Right cardiac atrium (tissue), 5 donors: ENCODE measurements at regions of chr7 and their contacts with region 1.

Region 1: GRCh38 chr7:85882335-85882734 is 695.5 kb upstream of the SEMA3D start:
- DNase-seq: no peak
- ATAC-seq: no peak
- H3K4me3 ChIP-seq: no peak overlapping the region
- H3K27ac ChIP-seq: no peak overlapping the region
- H3K4me1 ChIP-seq: no peaks in the 10 kb centered on the region
- H3K27me3 ChIP-seq: no peaks in the 10 kb centered on the region

Region 2: GRCh38 chr7:86904949-86905834 is 1022.9 kb after region 1 on chr7:
- intact Hi-C with region 1: loop called in 2 of 4 experiments (anchors 10 kb)
- DNase-seq: peak in 1 of 3 donors; percentile 26
- ATAC-seq: no peak
- H3K4me3 ChIP-seq: no peak overlapping the region
- H3K27ac ChIP-seq: no peak overlapping the region
- H3K4me1 ChIP-seq: no peaks in the 10 kb centered on the region
- H3K27me3 ChIP-seq: no peaks in the 10 kb centered on the region